ENCODE measurements at regions of chr4 and their contacts with region 1.

Region 1: DNA sequence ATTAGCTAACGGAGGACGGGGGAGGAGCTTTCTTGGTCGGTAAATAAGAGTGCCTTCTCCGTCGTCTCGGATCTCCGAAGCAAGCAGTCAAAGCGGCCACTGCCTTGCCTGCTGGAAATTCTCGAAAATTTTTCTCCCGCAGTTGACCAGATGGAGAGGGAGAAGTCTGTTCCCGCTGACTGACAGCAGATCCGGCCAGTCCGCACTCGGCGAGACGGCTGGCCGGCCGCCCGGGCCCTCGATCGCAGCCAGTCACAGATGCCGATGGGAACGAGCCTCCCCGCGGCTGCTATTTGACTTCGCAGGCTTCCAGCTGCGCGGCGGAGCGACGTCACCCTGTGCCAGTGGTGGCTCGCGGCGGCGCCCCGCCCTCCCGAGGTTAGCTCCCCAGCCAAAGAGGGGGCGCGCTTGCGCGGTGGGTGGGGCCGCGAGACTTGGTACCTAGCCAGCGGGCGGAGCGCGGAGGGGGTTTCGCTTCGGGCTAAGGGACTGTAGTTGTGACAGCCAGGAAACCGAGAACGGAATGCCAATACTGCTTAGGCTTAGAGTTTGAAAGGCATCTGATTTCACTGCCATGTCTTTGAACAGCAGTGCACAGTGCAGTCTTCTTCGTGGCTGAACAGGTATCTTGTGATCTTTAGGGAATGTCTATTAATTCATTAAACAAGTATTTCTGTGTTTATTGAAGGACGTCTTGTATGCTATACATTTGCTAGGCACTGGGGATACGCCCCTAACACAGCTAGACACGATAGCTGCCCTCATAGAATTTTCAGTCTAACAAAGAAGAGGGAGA is at the start of gene PPM1K:
- DNase-seq: peak; percentile 100
- H3K4me3 Mint-ChIP-seq: peak within 1 kb of the TSS; percentile 95
- H3K27ac Mint-ChIP-seq: peak within 1 kb of the TSS; percentile 99
- H3K4me1 Mint-ChIP-seq: peaks cover 37% of the 10 kb centered on the region
- H3K27me3 Mint-ChIP-seq: no peaks in the 10 kb centered on the region
- total RNA-seq, gene PPM1K: 38.8 and 43.8 TPM in 2 replicates

Region 2: DNA sequence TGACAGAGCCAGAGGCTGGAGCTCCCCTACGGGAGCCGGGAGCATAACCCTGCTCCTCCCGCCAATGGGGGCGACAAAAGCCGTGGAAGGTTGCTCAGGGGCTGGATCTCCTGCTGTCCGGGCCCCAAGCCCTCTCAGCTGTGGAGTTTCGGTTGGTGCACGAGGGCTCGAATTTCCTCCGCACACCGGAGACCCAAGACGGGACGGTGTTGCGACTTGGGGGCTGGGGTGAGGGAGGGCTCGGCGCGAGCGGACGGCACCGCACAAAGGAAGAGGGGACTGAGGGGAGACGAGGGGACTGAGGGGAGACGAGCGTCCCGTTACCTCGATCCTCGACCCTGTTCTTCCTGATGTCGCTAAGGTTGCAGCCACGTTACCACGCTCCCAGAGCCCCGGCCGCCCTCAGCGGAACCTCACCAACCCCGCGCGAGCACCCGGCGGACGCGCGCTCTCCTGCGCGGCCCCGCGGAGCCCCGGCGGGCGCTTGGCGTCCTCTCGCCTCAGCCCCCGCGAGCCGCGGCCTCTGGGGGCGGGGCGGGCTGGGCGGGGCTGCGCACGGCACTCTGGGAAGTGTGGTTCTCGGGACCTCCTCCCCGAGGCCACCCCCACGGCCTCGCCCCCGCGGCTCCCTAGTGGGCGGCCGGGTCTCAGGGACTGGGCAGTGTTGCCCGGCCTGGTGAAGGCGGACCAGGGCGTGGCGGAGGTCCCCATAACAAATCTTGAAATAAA is 1064.4 kb before region 1 on chr4 and contains the start of gene KLHL8:
- intact Hi-C with region 1: loop called (anchors 10 kb)
- DNase-seq: peak; percentile 97
- H3K4me3 Mint-ChIP-seq: peak within 1 kb of the TSS; percentile 89
- H3K27ac Mint-ChIP-seq: peak within 1 kb of the TSS; percentile 95
- H3K4me1 Mint-ChIP-seq: peaks cover 10% of the 10 kb centered on the region
- H3K27me3 Mint-ChIP-seq: peaks cover 9% of the 10 kb centered on the region
- total RNA-seq, gene KLHL8: 16.5 and 17.1 TPM in 2 replicates

Region 3: DNA sequence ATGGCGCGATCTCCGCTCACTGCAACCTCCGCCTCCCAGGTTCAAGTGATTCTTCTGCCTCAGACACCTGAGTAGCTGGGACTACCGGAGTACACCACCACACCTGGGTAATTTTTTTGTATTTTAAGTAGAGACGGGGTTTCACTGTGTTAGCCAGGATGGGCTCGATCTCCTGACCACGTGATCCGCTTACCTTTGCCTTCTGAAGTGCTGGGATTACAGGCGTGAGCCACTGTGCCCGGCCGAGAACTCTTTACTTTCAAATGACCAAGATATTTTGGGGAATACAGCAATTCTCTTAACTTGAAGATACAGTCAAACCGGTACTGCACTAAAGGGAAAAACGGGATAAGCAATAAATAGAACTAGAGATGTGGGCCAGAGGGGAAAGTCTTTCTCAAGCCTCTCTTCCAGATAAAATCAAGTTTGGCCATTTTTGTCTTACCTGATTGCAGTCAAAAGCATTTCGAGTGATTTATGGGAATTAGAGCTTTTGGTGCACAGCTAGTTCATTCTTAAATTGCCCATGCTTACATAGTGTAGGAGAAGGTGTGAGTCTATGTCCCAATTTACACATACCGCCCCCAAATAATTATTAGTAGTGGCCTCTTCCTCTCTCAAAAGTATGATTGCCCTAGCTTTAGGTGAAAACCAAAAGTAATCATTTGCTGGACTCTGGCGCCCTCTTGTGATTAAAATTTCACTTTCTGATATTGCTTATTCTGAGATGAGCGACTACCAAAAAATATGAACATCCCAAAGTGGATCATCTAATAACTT is 73.0 kb before region 1 on chr4:
- intact Hi-C with region 1: loop called (anchors 5 kb)
- DNase-seq: peak; percentile 89
- H3K4me3 Mint-ChIP-seq: no peak overlapping the region
- H3K27ac Mint-ChIP-seq: no peak overlapping the region
- H3K4me1 Mint-ChIP-seq: peaks cover 5% of the 10 kb centered on the region
- H3K27me3 Mint-ChIP-seq: peaks cover 13% of the 10 kb centered on the region

Region 4: DNA sequence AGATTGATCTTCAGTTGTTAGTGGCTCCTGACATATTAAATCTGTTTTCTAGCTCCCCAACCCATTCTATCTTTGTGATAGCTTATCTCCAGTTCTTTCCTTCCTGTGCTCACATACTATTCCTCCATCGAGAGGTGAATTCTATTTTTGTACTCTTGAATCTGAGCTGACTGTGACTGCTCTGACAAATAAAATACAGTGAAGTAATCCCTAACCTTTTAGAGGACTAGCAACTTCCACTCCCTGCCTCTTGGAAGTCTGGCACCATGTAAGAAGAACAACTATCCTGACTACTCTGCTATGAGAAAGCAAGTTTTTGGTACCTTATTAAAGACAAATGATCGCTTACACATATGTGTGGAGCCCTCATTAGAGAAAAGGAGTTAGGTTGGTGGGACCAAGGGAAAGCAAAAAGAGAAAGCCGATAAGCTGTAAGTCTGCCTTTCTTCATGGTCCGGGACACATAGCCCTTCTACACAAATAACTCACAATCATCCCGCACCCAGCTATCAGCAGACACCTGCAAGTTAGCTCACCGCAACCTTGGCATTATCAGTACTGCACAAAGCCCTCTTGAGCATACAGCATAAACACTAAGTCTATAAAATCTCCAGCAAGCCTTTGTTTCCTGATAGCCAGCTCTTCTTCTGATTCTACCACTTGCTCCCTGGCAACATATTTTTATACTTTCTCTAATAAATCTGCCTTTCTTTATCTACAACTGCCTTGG is 13.3 kb after region 1 on chr4:
- intact Hi-C with region 1: no loop called
- DNase-seq: no peak
- H3K4me3 Mint-ChIP-seq: no peak overlapping the region
- H3K27ac Mint-ChIP-seq: no peak overlapping the region
- H3K4me1 Mint-ChIP-seq: no peaks in the 10 kb centered on the region
- H3K27me3 Mint-ChIP-seq: no peaks in the 10 kb centered on the region

Region 5: DNA sequence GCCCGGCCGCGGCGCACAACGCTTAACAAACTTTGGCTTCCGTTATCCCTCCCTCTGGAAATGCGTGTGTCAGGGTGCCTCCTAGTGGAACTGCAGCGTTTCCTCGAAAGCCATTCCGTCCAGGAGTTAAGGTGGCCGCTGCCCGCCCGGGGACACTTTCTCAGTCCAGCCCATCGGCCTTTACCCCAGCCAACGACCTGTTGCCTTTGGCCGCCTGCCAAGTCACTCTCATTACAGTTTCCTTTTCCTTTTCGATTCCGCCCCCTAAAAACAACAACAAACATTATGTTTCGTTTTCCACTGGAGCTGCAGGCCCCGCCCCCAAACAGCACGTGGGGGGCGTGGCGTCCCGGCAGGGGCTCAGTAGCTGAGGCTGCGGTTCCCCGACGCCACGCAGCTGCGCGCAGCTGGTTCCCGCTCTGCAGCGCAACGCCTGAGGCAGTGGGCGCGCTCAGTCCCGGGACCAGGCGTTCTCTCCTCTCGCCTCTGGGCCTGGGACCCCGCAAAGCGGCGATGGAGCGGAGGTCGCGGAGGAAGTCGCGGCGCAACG is 172.2 kb after region 1 on chr4 and contains the start of gene HERC5:
- intact Hi-C with region 1: loop called (anchors 1 kb)
- DNase-seq: peak; percentile 98
- H3K4me3 Mint-ChIP-seq: peak within 1 kb of the TSS; percentile 93
- H3K27ac Mint-ChIP-seq: peak within 1 kb of the TSS; percentile 100
- H3K4me1 Mint-ChIP-seq: peaks cover 47% of the 10 kb centered on the region
- H3K27me3 Mint-ChIP-seq: no peaks in the 10 kb centered on the region
- total RNA-seq, gene HERC5: 18.1 and 19.7 TPM in 2 replicates

Region 6: DNA sequence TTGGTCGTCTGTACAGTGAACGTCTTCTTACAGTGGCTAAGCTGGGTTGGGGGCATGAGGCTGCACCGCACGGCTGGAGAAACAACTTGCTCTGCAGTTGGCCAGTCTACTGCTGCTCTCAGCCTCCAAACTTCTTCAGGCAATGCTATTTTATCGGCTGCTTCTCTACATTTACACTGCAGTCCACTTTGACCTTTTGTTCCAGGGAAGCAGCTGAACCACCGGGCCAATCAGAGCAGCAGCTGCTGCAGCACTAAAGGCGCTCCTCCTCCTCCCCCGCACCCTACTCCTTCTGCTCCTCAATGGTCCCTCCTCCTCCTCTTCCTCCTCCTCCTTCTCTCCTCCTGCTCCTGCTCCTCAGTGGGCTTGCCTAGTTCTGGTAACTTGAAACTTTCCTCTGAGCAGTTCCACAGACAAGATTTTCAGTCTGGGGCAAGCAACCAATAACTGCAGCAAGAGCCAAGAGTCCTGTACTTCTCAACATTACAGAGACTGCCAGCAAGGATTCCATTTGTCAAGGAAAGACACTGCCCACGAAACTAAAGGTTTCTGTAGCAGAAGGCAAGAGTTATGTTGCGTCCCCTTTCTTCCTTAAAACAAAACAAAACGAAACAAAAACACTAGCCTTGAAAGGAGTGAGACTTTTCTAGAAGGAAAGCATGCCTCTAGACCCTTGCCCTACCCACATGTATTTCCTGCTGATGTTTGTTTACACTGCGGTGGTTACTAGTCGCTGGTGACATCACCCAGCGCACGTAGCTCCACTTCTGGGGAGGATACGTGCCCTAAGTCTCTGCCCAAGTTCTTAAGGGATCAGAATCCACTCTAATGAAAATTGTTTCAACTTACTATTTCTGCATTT is 538.7 kb after region 1 on chr4:
- intact Hi-C with region 1: loop called (anchors 1 kb)
- DNase-seq: peak; percentile 93
- H3K4me3 Mint-ChIP-seq: peak overlapping the region; percentile 88
- H3K27ac Mint-ChIP-seq: peak overlapping the region; percentile 98
- H3K4me1 Mint-ChIP-seq: peaks cover 38% of the 10 kb centered on the region
- H3K27me3 Mint-ChIP-seq: peaks cover under 1% of the 10 kb centered on the region